Adrenal gland (tissue), 19 donors: ENCODE measurements at regions of chr1 and their contacts with region 1.

Region 1: GRCh38 chr1:169595764-169596711 is 9.8 kb upstream of the F5 start:
- DNase-seq: no peak
- H3K4me3 ChIP-seq: no peak overlapping the region
- H3K27ac ChIP-seq: no peak overlapping the region
- H3K4me1 ChIP-seq: no peaks in the 10 kb centered on the region
- H3K27me3 ChIP-seq: peaks cover 7% of the 10 kb centered on the region
- CTCF ChIP-seq: no peak
- POLR2A ChIP-seq: no peak

Region 2: GRCh38 chr1:169699711-169700110 is 103.7 kb after region 1 on chr1:
- intact Hi-C with region 1: no loop called
- DNase-seq: no peak
- H3K4me3 ChIP-seq: no peak overlapping the region
- H3K27ac ChIP-seq: no peak overlapping the region
- H3K4me1 ChIP-seq: no peaks in the 10 kb centered on the region
- H3K27me3 ChIP-seq: no peaks in the 10 kb centered on the region
- CTCF ChIP-seq: no peak
- POLR2A ChIP-seq: no peak

Region 3: DNA sequence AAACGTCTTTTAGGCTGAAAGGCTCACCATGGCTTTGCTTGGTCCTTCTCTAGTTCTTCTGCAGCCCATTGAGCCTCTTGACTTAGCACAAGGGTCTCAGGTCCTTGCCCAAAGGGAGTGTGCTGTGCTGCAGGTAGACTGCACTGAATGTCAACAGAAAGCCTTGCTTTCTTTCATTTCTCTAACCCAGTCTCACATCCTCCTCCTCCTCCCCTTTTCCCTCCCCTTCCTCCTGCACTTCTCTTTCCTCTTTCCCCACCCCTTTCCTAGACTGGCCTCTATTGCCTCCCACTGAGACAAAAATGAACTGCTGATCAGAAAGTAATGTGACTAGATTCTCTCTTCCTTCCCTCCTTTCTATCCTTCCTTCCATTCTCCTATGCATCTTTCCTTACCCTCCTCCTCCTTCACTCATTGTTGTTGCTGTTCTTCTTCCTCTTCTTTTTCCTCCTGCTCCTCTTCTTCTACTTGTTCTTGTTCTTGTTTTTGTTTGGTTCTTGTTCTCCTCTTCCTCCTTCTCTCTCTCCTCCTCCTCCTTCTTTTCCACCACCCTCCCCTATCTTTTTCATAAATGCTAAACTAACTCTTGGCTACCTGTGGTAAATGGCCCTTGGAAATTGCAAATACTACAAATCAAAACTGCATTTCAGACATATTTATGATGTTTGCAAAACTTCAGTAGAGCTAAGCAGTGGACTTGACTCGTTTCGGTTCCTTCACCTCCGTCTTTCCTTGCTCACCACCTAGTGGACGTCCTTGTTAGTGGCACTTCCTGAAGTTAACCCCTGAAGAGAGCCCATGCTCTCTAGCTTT is 115.6 kb after region 1 on chr1 and contains the start of gene SELL:
- intact Hi-C with region 1: loop called in 1 of 2 experiments (anchors 10 kb)
- DNase-seq: peak; percentile 50 to 75 (median 63)
- H3K4me3 ChIP-seq: peak within 1 kb of the TSS in 1 of 4 donors; percentile 42
- H3K27ac ChIP-seq: no peak within 1 kb of the TSS
- H3K4me1 ChIP-seq: no peaks in the 10 kb centered on the region
- H3K27me3 ChIP-seq: no peaks in the 10 kb centered on the region
- CTCF ChIP-seq: peak; percentile 57 to 77 (median 69)
- POLR2A ChIP-seq: no peak
- total RNA-seq, gene SELL: 0.61 to 2.5 (median 1.1) TPM